K562 (cell line): ENCODE measurements at regions of chr5 and their contacts with region 1.

Region 1: GRCh38 chr5:179852993-179853547 is 5.5 kb downstream of the MRNIP start:
- DNase-seq: no peak
- ATAC-seq: no peak
- H3K4me3 ChIP-seq: no peak overlapping the region
- H3K27ac ChIP-seq: no peak overlapping the region
- H3K4me1 ChIP-seq: peaks cover under 1 to 2% of the 10 kb centered on the region in 2 experiments; a peak in 3 of 5 replicates
- H3K27me3 ChIP-seq: no peaks in the 10 kb centered on the region
- CTCF ChIP-seq: no peak
- EP300 ChIP-seq: no peak
- POLR2A ChIP-seq: no peak
- RAD21 ChIP-seq: no peak

Region 2: DNA sequence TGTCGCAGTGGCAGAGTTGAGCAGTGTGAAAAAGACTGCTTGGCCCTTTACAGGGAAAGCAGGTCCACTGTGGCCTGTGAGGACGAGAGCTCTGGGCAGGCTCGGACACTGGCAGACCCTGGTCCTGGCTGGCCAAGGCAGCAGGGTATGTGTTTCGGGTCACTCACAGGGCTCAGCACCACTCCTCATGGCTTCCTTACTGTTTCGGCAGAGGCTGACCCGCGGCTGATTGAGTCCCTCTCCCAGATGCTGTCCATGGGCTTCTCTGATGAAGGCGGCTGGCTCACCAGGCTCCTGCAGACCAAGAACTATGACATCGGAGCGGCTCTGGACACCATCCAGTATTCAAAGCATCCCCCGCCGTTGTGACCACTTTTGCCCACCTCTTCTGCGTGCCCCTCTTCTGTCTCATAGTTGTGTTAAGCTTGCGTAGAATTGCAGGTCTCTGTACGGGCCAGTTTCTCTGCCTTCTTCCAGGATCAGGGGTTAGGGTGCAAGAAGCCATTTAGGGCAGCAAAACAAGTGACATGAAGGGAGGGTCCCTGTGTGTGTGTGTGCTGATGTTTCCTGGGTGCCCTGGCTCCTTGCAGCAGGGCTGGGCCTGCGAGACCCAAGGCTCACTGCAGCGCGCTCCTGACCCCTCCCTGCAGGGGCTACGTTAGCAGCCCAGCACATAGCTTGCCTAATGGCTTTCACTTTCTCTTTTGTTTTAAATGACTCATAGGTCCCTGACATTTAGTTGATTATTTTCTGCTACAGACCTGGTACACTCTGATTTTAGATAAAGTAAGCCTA is 16.6 kb before region 1 on chr5:
- CTCF ChIA-PET with region 1: no interaction called
- POLR2A ChIA-PET with region 1: interaction called, 17 read pairs
- in situ Hi-C with region 1: no loop called
- intact Hi-C with region 1: no loop called
- DNase-seq: peak in 2 of 4 experiments; percentile 26 to 35
- ATAC-seq: peak; percentile 65
- H3K4me3 ChIP-seq: no peak overlapping the region
- H3K27ac ChIP-seq: no peak overlapping the region; the same call in 2 of the 3 replicates
- H3K4me1 ChIP-seq: peaks cover 0 to 19% of the 10 kb centered on the region in 2 experiments; a peak in 3 of 5 replicates
- H3K27me3 ChIP-seq: no peaks in the 10 kb centered on the region
- CTCF ChIP-seq: peak; percentile 6 to 27 (median 18); a peak in 2 of 6 replicates
- EP300 ChIP-seq: no peak
- POLR2A ChIP-seq: peak; percentile 73
- RAD21 ChIP-seq: peak in 1 of 2 experiments; percentile 6; a peak in 1 of 4 replicates